ENCODE measurements at regions of chr9 and their contacts with region 1.

Region 1: DNA sequence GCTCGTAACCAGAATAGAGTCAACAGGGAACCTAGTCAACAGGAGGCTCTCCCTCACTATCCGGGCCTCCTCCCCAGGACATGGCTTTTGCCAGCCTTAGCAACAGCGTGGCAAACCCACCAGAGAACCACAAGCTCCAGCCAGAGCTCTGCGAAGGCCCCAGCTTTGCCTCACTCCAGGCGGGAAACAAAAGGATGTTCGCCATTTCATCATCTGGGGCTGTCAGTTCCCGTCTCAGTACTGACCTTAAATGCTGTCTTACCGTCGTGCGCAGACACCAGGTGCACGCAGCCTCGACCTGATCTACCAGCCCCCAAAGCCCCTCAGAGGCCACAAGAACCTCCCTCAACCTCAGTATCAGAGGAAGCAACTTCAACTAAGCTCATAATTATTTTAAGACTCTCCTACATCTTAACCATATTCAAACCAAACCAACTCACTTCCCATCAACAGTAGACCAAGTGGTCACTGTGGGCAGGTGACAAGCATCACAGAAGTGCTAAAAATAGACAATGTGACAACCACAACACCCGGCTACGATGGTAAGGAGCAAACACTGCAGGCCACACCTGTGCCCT is 71.4 kb downstream of the SEMA4D start:
- DNase-seq: no peak
- H3K4me3 ChIP-seq: no peak overlapping the region
- H3K27ac ChIP-seq: no peak overlapping the region
- H3K4me1 ChIP-seq: peaks cover 8% of the 10 kb centered on the region
- H3K27me3 ChIP-seq: no peaks in the 10 kb centered on the region
- CTCF ChIP-seq: no peak

Region 2: GRCh38 chr9:88949425-88949824 is 477.0 kb before region 1 on chr9:
- CTCF ChIA-PET with region 1: no interaction called
- POLR2A ChIA-PET with region 1: no interaction called
- intact Hi-C with region 1: no loop called
- DNase-seq: no peak
- H3K4me3 ChIP-seq: no peak overlapping the region
- H3K27ac ChIP-seq: no peak overlapping the region
- H3K4me1 ChIP-seq: peaks cover 44% of the 10 kb centered on the region
- H3K27me3 ChIP-seq: no peaks in the 10 kb centered on the region
- CTCF ChIP-seq: no peak

Region 3: DNA sequence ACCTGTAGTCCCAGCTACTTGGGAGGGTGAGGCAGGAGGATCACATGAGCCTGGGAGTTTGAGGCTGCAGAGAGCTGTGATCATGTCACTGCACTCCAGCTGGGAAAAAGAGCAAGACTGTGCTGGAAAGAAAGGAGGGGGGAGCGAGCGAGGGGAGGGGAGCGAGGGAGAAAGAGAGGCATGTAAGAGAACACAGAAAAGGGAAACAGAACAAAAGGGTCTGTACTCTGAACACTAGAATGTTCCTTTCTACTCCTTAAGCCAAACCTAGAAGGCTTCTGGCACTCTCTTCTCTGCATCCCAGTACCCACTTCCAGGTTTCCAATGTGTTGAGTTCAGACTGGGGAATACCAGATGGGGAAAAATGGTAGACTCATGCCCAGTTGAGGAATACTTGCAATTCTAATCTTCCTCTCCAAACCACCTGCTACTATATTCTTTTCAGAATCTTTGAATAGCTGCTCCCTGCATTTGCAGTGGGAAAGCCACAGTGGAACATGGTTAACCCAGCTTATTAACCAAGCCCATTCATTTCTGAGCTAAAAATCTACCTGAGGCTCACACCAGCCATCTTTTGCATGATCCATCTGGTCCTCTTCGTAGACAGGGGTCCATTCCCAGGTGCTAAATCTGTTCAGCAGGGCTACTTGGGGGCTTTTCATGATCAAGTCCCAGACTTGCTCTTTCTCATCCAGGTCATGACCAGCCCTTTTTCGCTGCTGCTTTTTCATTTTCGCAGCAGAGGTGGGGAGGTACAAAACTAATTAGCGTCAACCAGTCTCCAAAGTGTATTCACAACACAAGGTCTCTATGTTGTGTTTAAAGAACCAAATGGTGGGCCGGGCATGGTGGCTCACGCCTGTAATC is 36.6 kb after region 1 on chr9:
- CTCF ChIA-PET with region 1: no interaction called
- POLR2A ChIA-PET with region 1: interaction called, 12 read pairs
- intact Hi-C with region 1: no loop called
- DNase-seq: no peak
- H3K4me3 ChIP-seq: no peak overlapping the region
- H3K27ac ChIP-seq: no peak overlapping the region
- H3K4me1 ChIP-seq: peaks cover 6% of the 10 kb centered on the region; the same call in 1 of the 2 replicates
- H3K27me3 ChIP-seq: no peaks in the 10 kb centered on the region
- CTCF ChIP-seq: no peak

Region 4: DNA sequence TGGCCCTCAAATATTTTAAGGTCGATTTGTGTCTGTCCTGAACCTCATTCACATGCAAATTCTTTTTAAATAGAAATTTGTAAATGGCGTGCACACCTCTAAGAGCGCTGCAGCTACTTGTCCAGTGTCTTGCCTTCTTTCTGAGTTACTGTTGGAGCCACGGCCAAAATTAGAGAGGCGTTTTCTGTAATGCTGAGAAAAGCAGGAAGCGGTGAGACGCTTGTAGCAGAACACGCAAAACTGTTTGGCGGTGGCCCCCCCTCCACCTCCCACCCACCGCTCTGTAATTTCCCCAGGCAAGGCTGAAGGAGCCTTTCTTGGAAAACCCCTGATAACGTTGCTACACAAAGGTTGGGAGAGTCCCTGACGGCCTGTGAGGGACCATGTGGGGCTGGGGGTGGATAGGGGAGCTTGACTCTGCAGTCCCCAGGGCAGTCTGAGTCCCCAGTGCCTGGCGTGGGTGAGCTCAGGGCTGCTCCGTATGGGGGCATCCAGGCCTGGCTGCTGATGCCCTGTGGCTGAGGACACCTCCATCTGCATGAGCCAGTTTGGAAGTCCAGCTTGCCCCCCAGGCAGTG is 274.8 kb after region 1 on chr9:
- CTCF ChIA-PET with region 1: no interaction called
- POLR2A ChIA-PET with region 1: no interaction called
- intact Hi-C with region 1: no loop called
- DNase-seq: no peak
- H3K4me3 ChIP-seq: no peak overlapping the region
- H3K27ac ChIP-seq: no peak overlapping the region
- H3K4me1 ChIP-seq: no peaks in the 10 kb centered on the region
- H3K27me3 ChIP-seq: peaks cover 95% of the 10 kb centered on the region
- CTCF ChIP-seq: no peak